ENCODE measurements at regions of chr13 and their contacts with region 1.

Region 1: GRCh38 chr13:50911937-50912795 is 2.6 kb downstream of the RNASEH2B start:
- DNase-seq: peak; percentile 52 to 71
- ATAC-seq: peak; percentile 25 to 43
- H3K4me3 ChIP-seq: no peak overlapping the region
- H3K27ac ChIP-seq: no peak overlapping the region
- H3K4me1 ChIP-seq: peaks cover 14 to 15% of the 10 kb centered on the region in 2 donors
- H3K27me3 ChIP-seq: no peaks in the 10 kb centered on the region
- CTCF ChIP-seq: peak; percentile 49 to 89 (median 71)
- POLR2A ChIP-seq: no peak

Region 2: GRCh38 chr13:50376895-50377575 is 535.1 kb before region 1 on chr13:
- in situ Hi-C with region 1: no loop called
- intact Hi-C with region 1: loop called (anchors 5 kb)
- DNase-seq: peak in 1 of 2 donors; percentile 42
- ATAC-seq: peak; percentile 56 to 70
- H3K4me3 ChIP-seq: no peak overlapping the region
- H3K27ac ChIP-seq: no peak overlapping the region
- H3K4me1 ChIP-seq: peaks cover 11 to 13% of the 10 kb centered on the region in 2 donors
- H3K27me3 ChIP-seq: no peaks in the 10 kb centered on the region
- CTCF ChIP-seq: peak in 4 of 5 experiments; percentile 45 to 54 (median 46)
- POLR2A ChIP-seq: no peak

Measured in gastrocnemius medialis (tissue), 4 donors.